Spleen (tissue), 13 donors: ENCODE measurements at regions of chr15 and their contacts with region 1.

Region 1: GRCh38 chr15:101014921-101015841 is 96.0 kb downstream of the LRRK1 start:
- DNase-seq: peak; percentile 92
- H3K4me3 ChIP-seq: no peak overlapping the region
- H3K27ac ChIP-seq: no peak overlapping the region
- H3K4me1 ChIP-seq: peaks cover 4 to 29% (median 21%) of the 10 kb centered on the region in 6 donors
- H3K27me3 ChIP-seq: no peaks in the 10 kb centered on the region
- CTCF ChIP-seq: peak; percentile 73 to 87 (median 83)
- POLR2A ChIP-seq: no peak

Region 2: GRCh38 chr15:101088788-101089583 is 73.8 kb after region 1 on chr15:
- intact Hi-C with region 1: loop called (anchors 10 kb)
- DNase-seq: peak; percentile 96
- H3K4me3 ChIP-seq: peak overlapping the region in 1 of 8 donors; percentile 51
- H3K27ac ChIP-seq: peak overlapping the region in 6 of 8 donors; percentile 73 to 87 (median 81)
- H3K4me1 ChIP-seq: peaks cover 14 to 60% (median 43%) of the 10 kb centered on the region in 6 donors
- H3K27me3 ChIP-seq: peaks cover 0 to 5% (median 0%) of the 10 kb centered on the region in 7 donors
- CTCF ChIP-seq: peak; percentile 97 to 100 (median 99)
- POLR2A ChIP-seq: no peak